Gastrocnemius medialis (tissue), 4 donors: ENCODE measurements at regions of chr5 and their contacts with region 1.

Region 1: GRCh38 chr5:150206779-150207115 is 16.9 kb downstream of the SLC6A7 start:
- DNase-seq: no peak
- ATAC-seq: no peak
- H3K4me3 ChIP-seq: no peak overlapping the region
- H3K27ac ChIP-seq: no peak overlapping the region
- H3K4me1 ChIP-seq: no peaks in the 10 kb centered on the region
- H3K27me3 ChIP-seq: no peaks in the 10 kb centered on the region
- CTCF ChIP-seq: no peak
- POLR2A ChIP-seq: no peak

Region 2: GRCh38 chr5:150172145-150172544 is 34.6 kb before region 1 on chr5:
- in situ Hi-C with region 1: no loop called
- intact Hi-C with region 1: loop called (anchors 1 kb)
- DNase-seq: no peak
- ATAC-seq: no peak
- H3K4me3 ChIP-seq: no peak overlapping the region
- H3K27ac ChIP-seq: no peak overlapping the region
- H3K4me1 ChIP-seq: no peaks in the 10 kb centered on the region
- H3K27me3 ChIP-seq: no peaks in the 10 kb centered on the region
- CTCF ChIP-seq: no peak
- POLR2A ChIP-seq: no peak